ENCODE measurements at regions of chr11 and their contacts with region 1.

Region 1: DNA sequence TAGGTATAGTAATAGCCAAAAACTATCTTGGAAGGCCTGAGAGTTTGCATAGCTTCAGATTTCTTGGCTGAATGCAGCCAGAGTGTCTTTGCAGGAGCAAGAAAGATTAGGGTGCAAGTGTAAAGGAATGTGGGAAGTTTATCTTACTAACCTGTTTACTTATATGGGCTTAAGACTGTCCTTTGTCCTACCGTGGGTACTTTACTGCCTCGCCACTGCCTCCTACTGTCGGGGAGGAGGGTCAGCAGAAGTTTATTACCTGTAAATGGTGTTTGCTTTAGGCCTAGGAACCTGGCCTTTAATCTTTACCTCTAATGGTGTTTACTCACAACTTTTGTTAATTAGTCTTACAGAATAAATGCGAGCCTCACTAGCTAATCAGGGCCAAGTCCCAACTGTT is 633.8 kb downstream of the DLG2 start:
- DNase-seq: peak; percentile 18
- H3K4me3 ChIP-seq: no peak overlapping the region
- H3K27ac ChIP-seq: no peak overlapping the region
- H3K4me1 ChIP-seq: no peaks in the 10 kb centered on the region
- H3K27me3 ChIP-seq: no peaks in the 10 kb centered on the region
- CTCF ChIP-seq: no peak

Region 2: GRCh38 chr11:84794663-84795443 is 198.5 kb before region 1 on chr11:
- intact Hi-C with region 1: loop called (anchors 10 kb)
- DNase-seq: no peak
- H3K4me3 ChIP-seq: no peak overlapping the region
- H3K27ac ChIP-seq: no peak overlapping the region
- H3K4me1 ChIP-seq: no peaks in the 10 kb centered on the region
- H3K27me3 ChIP-seq: no peaks in the 10 kb centered on the region
- CTCF ChIP-seq: no peak

Region 3: DNA sequence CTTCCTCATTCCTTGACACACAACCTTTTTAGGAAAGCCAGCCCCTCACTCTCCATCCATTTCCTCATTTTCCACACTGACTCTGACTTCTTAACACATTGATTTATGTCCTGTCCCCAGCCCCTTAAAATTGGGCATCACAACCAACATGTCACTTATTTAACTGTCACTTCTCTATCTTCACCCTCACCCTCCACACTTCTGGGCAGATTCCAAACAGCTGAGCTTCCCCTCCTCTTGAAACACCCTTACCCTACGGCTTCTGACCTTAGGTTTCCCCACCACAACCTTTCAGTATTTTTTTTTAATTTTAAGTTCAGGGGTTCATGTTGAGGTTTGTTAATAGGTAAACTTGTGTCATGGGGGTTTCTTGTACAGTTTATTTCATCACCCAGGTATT is 62.5 kb before region 1 on chr11:
- intact Hi-C with region 1: no loop called
- DNase-seq: no peak
- H3K4me3 ChIP-seq: no peak overlapping the region
- H3K27ac ChIP-seq: no peak overlapping the region
- H3K4me1 ChIP-seq: no peaks in the 10 kb centered on the region
- H3K27me3 ChIP-seq: no peaks in the 10 kb centered on the region
- CTCF ChIP-seq: no peak